Activated naive CD4-positive, alpha-beta T cell treated with anti-CD3 and anti-CD28 coated beads for 36 hours (primary cell): ENCODE measurements at regions of chr4 and their contacts with region 1.

Region 1: DNA sequence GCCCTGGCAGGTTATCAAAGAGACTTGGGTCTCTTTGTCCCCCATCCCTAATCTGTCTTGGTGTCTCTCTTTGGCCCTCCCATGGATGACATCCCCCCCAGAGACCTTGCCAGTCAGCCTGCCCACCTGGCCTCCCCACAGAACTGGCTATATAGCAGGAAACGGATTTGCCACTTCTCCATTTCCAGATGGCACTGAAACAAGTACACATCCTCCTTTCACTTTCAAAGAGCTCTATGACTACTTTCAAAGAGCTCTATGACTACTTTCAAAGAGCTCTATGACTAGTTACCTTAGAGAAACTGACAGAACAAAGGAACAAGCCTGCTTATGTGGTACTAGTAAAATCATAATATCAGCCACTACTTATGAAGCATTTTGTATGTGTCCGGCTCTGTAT is 175.3 kb downstream of the MAML3 start:
- DNase-seq: peak; percentile 45
- H3K4me3 Mint-ChIP-seq: no peak overlapping the region
- H3K27ac Mint-ChIP-seq: no peak overlapping the region
- H3K4me1 Mint-ChIP-seq: peaks cover 22% of the 10 kb centered on the region
- H3K27me3 Mint-ChIP-seq: no peaks in the 10 kb centered on the region

Region 2: DNA sequence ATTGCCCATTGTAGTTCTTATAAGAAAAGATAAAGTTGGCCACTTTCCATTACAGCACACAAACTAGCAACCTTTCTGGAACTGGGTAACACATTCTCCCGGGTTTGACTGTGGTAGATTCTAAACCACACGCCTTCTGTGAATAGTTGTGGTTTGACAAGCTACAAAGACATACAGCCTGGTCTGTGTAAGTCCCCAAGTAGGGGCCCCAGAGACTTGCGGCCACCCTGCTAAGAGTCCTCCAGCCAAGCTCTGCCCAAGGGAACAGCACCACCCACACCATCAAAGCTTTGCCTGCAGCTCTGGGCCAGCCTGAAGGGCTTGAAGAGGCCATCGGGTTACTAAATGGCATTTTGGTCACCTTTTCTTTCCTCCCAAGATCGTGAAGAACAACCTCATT is 28.1 kb before region 1 on chr4:
- CTCF ChIA-PET with region 1: no interaction called
- intact Hi-C with region 1: loop called (anchors 1 kb)
- DNase-seq: peak; percentile 60
- H3K4me3 Mint-ChIP-seq: no peak overlapping the region
- H3K27ac Mint-ChIP-seq: peak overlapping the region; percentile 48
- H3K4me1 Mint-ChIP-seq: peaks cover 25% of the 10 kb centered on the region
- H3K27me3 Mint-ChIP-seq: no peaks in the 10 kb centered on the region

Region 3: DNA sequence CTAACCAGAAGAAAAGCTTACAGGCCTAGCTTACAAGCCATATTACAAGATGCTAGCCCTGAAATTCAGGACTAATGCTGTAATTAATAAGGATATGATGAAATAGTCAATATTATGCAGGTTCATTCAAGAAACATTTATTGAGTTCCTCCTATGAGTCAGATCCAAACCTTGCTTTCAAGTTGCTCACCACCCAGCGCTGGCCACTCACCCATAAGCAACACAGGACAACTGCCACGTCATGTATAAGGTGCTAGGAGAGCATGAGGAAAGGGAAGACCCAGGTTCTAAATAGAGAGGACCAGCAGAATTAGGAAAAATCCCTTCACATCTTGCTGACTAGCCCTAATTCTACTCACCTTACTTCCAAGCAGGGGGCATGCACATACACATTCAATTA is 152.0 kb after region 1 on chr4:
- CTCF ChIA-PET with region 1: no interaction called
- intact Hi-C with region 1: no loop called
- DNase-seq: no peak
- H3K4me3 Mint-ChIP-seq: no peak overlapping the region
- H3K27ac Mint-ChIP-seq: no peak overlapping the region
- H3K4me1 Mint-ChIP-seq: peaks cover 23% of the 10 kb centered on the region
- H3K27me3 Mint-ChIP-seq: peaks cover 2% of the 10 kb centered on the region

Region 4: DNA sequence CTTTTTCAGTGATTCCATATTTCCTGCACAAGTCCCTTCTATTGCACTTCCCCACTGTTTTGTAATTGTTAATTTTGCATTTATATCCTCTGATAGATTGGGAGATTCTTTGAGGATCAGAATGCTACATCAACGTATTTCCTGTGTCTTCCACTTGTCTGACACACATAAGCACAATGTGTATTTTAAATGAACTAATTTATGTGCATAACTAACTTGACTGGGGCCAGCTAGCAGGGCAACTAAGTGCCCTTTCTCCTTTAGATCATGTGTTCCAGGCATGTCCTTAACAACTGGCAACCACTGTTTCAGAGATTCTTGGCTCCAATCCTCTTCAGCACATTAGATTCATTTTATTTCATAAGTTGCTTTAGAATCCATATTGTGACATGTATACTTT is 605.7 kb after region 1 on chr4:
- CTCF ChIA-PET with region 1: no interaction called
- intact Hi-C with region 1: no loop called
- DNase-seq: no peak
- H3K4me3 Mint-ChIP-seq: no peak overlapping the region
- H3K27ac Mint-ChIP-seq: no peak overlapping the region
- H3K4me1 Mint-ChIP-seq: no peaks in the 10 kb centered on the region
- H3K27me3 Mint-ChIP-seq: peaks cover 8% of the 10 kb centered on the region